ENCODE measurements at regions of chr15 and their contacts with region 1.

Region 1: DNA sequence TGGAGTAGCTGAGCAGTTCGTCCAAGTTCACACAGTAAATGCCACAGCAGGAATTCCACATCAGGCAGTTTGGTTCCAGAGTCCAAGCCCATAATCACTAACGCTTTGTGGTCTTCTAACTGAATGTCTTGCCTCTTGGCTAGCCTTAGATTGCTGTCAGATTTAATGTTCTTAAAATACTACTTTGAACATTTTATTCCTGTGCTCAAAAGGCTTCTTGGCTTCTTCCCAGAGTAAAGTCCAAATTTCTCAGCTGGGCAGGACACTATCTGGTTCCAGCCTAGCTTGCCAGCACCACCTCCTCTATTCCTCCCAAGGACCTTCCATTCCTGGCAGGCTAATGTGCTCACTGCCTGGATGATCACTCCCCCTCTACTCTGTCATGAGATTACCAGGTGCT is 256.9 kb downstream of the SQOR start:
- DNase-seq: no peak
- ATAC-seq: peak; percentile 42 to 94 (median 77)
- H3K4me3 ChIP-seq: no peak overlapping the region
- H3K27ac ChIP-seq: peak overlapping the region in 1 of 10 donors; percentile 35
- H3K4me1 ChIP-seq: peaks cover 0 to 17% (median 9%) of the 10 kb centered on the region in 9 donors
- H3K27me3 ChIP-seq: no peaks in the 10 kb centered on the region
- CTCF ChIP-seq: no peak

Region 2: DNA sequence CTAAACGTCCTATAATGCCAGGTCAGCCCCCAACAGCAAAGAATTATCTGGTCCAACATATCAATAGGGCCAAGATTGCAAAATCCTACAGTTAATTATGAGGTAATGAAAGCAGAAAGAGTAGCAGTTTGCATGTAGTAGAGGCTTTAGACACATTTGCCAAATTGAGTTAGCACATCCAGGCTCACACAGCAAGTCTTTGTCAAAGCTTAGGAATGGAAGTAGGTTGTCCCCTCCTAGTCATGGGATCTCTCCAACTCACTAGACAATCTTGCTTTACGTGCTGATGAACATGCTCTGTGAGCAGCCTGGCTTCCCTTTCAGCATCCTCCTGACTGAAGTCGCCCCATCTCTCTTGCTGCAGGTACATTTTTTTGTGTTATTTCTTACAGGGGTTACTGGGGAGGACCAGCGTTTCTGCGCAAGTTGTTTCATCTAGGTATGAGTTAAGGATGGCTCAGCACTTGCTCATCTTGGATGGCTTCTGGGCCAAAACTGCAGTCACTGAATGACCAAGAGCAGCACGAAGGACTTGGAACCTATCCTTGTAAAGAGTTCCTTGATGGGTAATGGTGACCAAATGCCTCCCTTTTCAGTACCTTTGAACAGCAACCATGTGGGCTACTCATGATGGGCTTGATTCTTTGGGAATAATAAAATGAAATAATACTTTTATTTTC is 201.0 kb before region 1 on chr15:
- intact Hi-C with region 1: no loop called
- DNase-seq: no peak
- ATAC-seq: no peak
- H3K4me3 ChIP-seq: no peak overlapping the region
- H3K27ac ChIP-seq: no peak overlapping the region
- H3K4me1 ChIP-seq: no peaks in the 10 kb centered on the region
- H3K27me3 ChIP-seq: no peaks in the 10 kb centered on the region
- CTCF ChIP-seq: no peak

Region 3: GRCh38 chr15:45829336-45830153 is 62.2 kb before region 1 on chr15:
- intact Hi-C with region 1: loop called in 1 of 10 experiments (anchors 10 kb)
- DNase-seq: no peak
- ATAC-seq: peak in 1 of 8 donors; percentile 13
- H3K4me3 ChIP-seq: no peak overlapping the region
- H3K27ac ChIP-seq: no peak overlapping the region
- H3K4me1 ChIP-seq: no peaks in the 10 kb centered on the region
- H3K27me3 ChIP-seq: no peaks in the 10 kb centered on the region
- CTCF ChIP-seq: no peak

Region 4: GRCh38 chr15:45970542-45970941 is 78.8 kb after region 1 on chr15:
- intact Hi-C with region 1: no loop called
- DNase-seq: no peak
- ATAC-seq: no peak
- H3K4me3 ChIP-seq: no peak overlapping the region
- H3K27ac ChIP-seq: no peak overlapping the region
- H3K4me1 ChIP-seq: no peaks in the 10 kb centered on the region
- H3K27me3 ChIP-seq: no peaks in the 10 kb centered on the region
- CTCF ChIP-seq: no peak